A549 (cell line): ENCODE measurements at regions of chr7 and their contacts with region 1.

Region 1: DNA sequence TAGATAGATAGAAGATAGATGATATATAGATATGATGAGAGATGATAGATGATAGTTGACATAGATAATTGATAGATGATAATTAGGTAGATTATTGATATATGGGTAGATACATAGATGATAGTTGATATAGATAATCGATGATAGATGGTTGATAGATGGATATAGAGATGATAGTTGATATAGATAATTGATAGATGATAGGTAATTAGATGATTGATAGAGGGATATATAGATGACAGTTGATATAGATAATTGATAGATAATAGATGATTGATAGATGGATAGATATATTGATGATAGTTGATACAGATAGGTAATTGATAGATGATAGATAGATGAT is 72.3 kb downstream of the PRR15 start:
- DNase-seq: no peak
- ATAC-seq: no peak
- H3K4me3 ChIP-seq: no peak overlapping the region
- H3K27ac ChIP-seq: no peak overlapping the region
- H3K4me1 ChIP-seq: no peaks in the 10 kb centered on the region
- CTCF ChIP-seq: no peak
- EP300 ChIP-seq: no peak
- POLR2A ChIP-seq: no peak
- RAD21 ChIP-seq: no peak; a peak in 1 of 5 replicates

Region 2: DNA sequence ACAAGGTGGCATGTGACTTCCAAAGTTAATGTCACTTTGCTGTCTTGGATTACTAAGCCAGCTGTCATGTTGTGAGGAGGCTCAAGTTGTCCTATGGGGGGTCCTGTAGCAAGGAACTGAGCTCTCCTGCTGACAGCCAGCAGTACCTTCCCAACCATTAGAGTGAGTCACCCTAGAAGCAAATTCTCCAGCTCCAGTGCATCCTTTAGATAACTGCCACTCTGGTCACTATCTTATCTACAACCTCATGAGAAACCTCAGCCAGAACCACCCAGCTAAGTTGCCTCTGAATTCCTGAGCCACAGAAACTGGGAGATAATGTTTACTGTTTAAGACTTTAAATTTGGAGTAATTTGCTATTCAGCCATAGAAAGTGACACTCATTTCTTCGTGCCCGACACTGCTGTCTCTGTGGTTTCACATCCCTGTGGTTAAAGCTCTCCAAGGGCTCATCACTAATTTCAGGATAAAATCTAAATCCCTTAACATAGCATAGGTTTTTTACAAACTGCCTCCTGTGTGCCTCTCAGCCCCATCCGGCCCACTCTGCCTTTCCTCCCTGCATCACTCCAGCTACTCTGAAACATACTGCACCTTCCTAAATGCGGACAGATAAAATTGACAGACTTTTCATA is 11.2 kb after region 1 on chr7:
- CTCF ChIA-PET with region 1: interaction called, 21 read pairs
- POLR2A ChIA-PET with region 1: no interaction called
- DNase-seq: no peak
- ATAC-seq: no peak
- H3K4me3 ChIP-seq: no peak overlapping the region
- H3K27ac ChIP-seq: no peak overlapping the region
- H3K4me1 ChIP-seq: no peaks in the 10 kb centered on the region
- CTCF ChIP-seq: no peak
- EP300 ChIP-seq: no peak
- POLR2A ChIP-seq: no peak
- RAD21 ChIP-seq: no peak

Region 3: GRCh38 chr7:29748286-29749108 is 112.5 kb after region 1 on chr7:
- CTCF ChIA-PET with region 1: interaction called, 10 read pairs
- POLR2A ChIA-PET with region 1: no interaction called
- DNase-seq: peak; percentile 13 to 65
- ATAC-seq: peak; percentile 87 to 91
- H3K4me3 ChIP-seq: no peak overlapping the region
- H3K27ac ChIP-seq: no peak overlapping the region
- H3K4me1 ChIP-seq: no peaks in the 10 kb centered on the region
- CTCF ChIP-seq: peak; percentile 76
- EP300 ChIP-seq: no peak
- POLR2A ChIP-seq: no peak
- RAD21 ChIP-seq: peak; percentile 73

Region 4: GRCh38 chr7:29871787-29872396 is 235.9 kb after region 1 on chr7:
- CTCF ChIA-PET with region 1: interaction called, 13 read pairs
- POLR2A ChIA-PET with region 1: no interaction called
- DNase-seq: peak in 1 of 2 experiments; percentile 17
- ATAC-seq: no peak
- H3K4me3 ChIP-seq: peak overlapping the region; percentile 36; the same call in 2 of the 3 replicates
- H3K27ac ChIP-seq: no peak overlapping the region
- H3K4me1 ChIP-seq: no peaks in the 10 kb centered on the region; the same call in 2 of the 3 replicates
- CTCF ChIP-seq: no peak
- EP300 ChIP-seq: no peak
- POLR2A ChIP-seq: no peak
- RAD21 ChIP-seq: no peak